HCT116 (cell line): ENCODE measurements at regions of chr7 and their contacts with region 1.

Region 1: DNA sequence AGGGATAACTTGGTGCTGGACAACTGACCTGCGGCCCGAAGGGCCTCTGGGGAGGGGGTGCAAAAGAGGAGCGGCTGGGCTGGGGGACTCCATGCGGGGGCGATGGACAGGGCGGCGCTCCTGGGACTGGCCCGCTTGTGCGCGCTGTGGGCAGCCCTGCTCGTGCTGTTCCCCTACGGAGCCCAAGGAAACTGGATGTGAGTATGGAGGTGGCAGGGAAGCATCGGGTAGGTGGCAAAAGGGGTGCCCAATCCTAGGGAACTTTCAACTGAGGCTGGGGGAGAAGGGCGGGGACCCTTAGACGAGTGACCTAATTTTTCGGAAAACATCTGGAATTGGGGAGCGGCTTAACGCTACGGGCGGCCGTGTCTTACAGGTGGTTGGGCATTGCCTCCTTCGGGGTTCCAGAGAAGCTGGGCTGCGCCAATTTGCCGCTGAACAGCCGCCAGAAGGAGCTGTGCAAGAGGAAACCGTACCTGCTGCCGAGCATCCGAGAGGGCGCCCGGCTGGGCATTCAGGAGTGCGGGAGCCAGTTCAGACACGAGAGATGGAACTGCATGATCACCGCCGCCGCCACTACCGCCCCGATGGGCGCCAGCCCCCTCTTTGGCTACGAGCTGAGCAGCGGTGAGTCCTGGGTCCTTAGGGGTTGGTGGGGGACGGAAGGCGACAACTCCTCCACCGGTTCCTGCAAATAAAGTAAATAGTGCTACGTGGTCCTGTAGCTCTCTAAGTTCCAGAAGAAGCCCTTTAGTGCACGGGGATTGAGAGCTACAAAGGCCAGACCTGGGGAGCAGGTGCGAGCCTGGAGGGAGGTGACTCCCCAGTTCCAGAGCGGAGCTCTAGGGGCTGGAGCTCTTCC is 622 bp downstream of the WNT16 start:
- DNase-seq: no peak
- ATAC-seq: peak; percentile 56
- H3K4me3 ChIP-seq: peak overlapping the region; percentile 55 to 88
- H3K27ac ChIP-seq: peak overlapping the region; percentile 92
- H3K4me1 ChIP-seq: peaks cover 35 to 68% of the 10 kb centered on the region in 2 experiments; a peak in 3 of 4 replicates
- H3K27me3 ChIP-seq: no peaks in the 10 kb centered on the region
- CTCF ChIP-seq: 0 out of 6 replicates have a peak, but pooled peaks of 1 of the 3 experiments have one; percentile 19
- POLR2A ChIP-seq: peak; percentile 8
- RAD21 ChIP-seq: peak; percentile 25; the same call in 1 of the 2 replicates

Region 2: GRCh38 chr7:121084748-121085336 is 244.6 kb before region 1 on chr7:
- CTCF ChIA-PET with region 1: no interaction called
- POLR2A ChIA-PET with region 1: no interaction called
- RAD21 ChIA-PET with region 1: no interaction called
- intact Hi-C with region 1: no loop called
- DNase-seq: no peak
- ATAC-seq: peak; percentile 52
- H3K4me3 ChIP-seq: peak overlapping the region in 1 of 2 experiments; percentile 18; a peak in 1 of 4 replicates
- H3K27ac ChIP-seq: no peak overlapping the region
- H3K4me1 ChIP-seq: peaks cover 9 to 33% of the 10 kb centered on the region in 2 experiments
- H3K27me3 ChIP-seq: no peaks in the 10 kb centered on the region
- CTCF ChIP-seq: no peak
- POLR2A ChIP-seq: no peak
- RAD21 ChIP-seq: no peak

Region 3: GRCh38 chr7:121126801-121127534 is 202.5 kb before region 1 on chr7:
- CTCF ChIA-PET with region 1: interaction called, 5 read pairs
- POLR2A ChIA-PET with region 1: no interaction called
- RAD21 ChIA-PET with region 1: no interaction called
- intact Hi-C with region 1: loop called (anchors 5 kb)
- DNase-seq: peak; percentile 51
- ATAC-seq: no peak
- H3K4me3 ChIP-seq: no peak overlapping the region
- H3K27ac ChIP-seq: no peak overlapping the region; the same call in 1 of the 2 replicates
- H3K4me1 ChIP-seq: peaks cover 4 to 28% of the 10 kb centered on the region in 2 experiments; a peak in 3 of 4 replicates
- H3K27me3 ChIP-seq: no peaks in the 10 kb centered on the region
- CTCF ChIP-seq: peak; percentile 16 to 88 (median 47); a peak in 5 of 6 replicates
- POLR2A ChIP-seq: no peak
- RAD21 ChIP-seq: peak; percentile 88

Region 4: DNA sequence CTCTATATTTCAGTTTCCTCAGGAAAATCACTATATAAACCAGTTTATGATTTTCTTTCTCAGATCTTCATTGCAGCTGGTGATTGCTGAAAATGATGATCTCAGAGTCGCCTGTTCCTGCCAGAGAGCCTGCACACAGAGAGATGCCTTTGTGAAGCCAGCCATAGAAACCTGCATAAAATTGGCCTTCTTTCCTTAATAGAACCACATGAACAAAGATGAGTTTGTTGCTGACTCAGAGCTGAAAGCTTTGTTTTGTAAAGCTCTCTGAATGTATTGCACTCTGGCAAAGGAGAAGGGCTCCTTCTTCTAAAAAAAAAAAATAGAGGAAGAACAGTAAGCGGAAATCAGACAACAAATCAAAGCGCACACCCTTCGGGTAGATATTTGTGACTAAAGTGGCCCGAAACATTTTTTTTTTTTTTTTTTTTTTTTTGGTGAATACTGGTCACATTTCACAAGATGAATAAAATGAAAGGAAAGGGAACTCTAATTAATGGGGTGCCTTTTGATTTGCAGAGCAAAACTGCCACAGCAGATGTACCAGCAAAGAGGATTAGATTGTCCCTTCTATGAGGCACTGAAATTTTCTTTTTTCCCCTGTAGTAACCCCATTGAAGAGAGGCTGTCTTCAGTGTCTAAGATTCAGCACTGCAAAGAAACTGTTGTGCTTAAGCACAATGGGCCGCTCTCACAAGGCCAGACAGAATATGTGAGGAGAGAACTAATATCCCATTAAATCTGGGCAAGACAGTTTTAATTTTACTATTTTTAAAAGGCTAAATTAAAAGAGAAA is 468.4 kb after region 1 on chr7:
- CTCF ChIA-PET with region 1: no interaction called
- POLR2A ChIA-PET with region 1: no interaction called
- RAD21 ChIA-PET with region 1: no interaction called
- intact Hi-C with region 1: no loop called
- DNase-seq: no peak
- ATAC-seq: no peak
- H3K4me3 ChIP-seq: no peak overlapping the region
- H3K27ac ChIP-seq: no peak overlapping the region
- H3K4me1 ChIP-seq: no peaks in the 10 kb centered on the region
- H3K27me3 ChIP-seq: no peaks in the 10 kb centered on the region
- CTCF ChIP-seq: no peak
- POLR2A ChIP-seq: no peak
- RAD21 ChIP-seq: no peak

Region 5: GRCh38 chr7:121810831-121811672 is 481.6 kb after region 1 on chr7:
- CTCF ChIA-PET with region 1: no interaction called
- POLR2A ChIA-PET with region 1: no interaction called
- RAD21 ChIA-PET with region 1: no interaction called
- intact Hi-C with region 1: no loop called
- DNase-seq: no peak
- ATAC-seq: no peak
- H3K4me3 ChIP-seq: no peak overlapping the region
- H3K27ac ChIP-seq: no peak overlapping the region
- H3K4me1 ChIP-seq: no peaks in the 10 kb centered on the region
- H3K27me3 ChIP-seq: no peaks in the 10 kb centered on the region
- CTCF ChIP-seq: no peak
- POLR2A ChIP-seq: no peak
- RAD21 ChIP-seq: no peak